Aorta (tissue), 5 donors: ENCODE measurements at regions of chr9 and their contacts with region 1.

Region 1: DNA sequence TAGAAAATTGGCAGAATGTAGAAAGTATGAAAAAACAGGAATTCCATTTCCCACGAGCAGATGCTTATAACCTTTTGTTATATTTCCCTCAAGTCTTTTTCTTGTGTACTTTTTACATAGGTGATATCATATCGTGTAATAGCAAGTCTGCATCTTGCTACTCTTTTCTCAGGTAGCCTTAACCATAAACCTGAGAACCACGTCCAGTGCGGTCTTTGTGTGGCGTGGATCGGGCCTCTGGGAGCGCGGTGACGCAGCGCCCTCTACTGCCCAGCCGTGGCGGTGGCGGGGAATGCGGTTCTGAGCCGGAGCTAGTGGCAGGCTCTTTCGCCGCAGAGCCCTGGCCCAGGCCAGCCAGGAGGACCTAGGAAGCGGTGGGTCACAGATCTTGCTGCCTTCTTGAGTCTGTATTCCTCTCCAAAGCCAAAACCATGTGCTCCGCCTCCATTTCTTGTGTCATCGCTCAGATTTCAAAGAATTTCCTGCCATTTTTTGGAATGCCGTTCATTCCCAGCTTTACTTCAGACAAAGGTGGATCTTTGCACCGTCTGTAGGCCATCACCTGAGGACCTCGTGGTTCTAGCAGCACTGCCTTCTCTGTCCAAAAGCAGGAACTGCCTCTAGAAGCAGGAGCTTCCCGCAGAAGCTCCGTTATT is 71.9 kb downstream of the MVB12B start:
- DNase-seq: peak; percentile 80 to 94
- ATAC-seq: peak; percentile 90
- H3K4me3 ChIP-seq: no peak overlapping the region
- H3K27ac ChIP-seq: no peak overlapping the region
- H3K4me1 ChIP-seq: no peaks in the 10 kb centered on the region
- H3K27me3 ChIP-seq: no peaks in the 10 kb centered on the region

Region 2: DNA sequence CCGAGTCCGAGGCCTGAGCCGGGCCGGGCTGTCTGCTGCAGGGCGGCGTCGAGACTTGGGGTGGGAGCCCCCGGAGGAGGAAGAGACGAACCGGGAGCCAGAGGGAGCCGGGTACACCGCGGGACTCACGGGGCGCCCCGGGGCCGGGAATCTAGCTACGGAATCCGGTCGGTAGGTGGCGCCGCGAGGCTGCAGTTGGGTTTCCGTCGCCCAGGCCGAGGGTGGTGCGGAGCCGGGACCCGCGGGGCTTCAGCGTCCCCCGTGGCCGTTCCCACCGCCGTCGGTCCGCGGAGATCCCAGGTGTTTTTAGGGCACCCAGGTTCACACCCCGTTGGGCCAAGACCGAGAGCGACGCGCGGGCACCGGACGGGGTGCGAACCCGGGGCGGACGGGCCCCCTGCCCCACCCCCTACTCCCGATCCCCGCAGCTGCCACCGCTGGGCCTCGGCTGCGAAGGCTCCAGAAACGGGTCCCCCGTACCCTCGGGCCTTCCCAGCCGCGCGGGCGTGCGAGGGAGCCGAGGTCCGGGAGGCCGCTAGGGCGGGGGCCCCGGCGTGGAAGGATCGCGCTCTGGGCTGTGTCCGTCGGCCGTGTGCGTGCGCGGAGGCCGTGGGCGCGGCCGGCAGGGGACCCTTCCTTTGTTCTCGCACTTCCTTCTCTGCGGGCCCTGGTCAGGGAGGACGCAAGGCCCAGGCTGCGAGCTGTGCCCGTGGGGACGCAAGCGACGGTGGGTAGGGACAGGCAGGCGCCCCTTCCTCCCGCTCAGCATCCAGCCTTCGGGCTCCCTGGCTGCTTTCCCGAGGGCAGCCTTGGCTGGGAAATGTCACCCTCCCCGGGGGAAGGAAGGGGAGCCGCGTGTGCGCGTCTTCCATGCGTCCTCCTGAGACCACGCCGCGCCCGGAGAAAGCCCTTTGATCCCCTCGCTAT is 990.3 kb before region 1 on chr9:
- intact Hi-C with region 1: loop called in 1 of 2 experiments (anchors 5 kb)
- DNase-seq: peak; percentile 82 to 95
- ATAC-seq: peak; percentile 87
- H3K4me3 ChIP-seq: peak overlapping the region in 1 of 2 donors; percentile 19
- H3K27ac ChIP-seq: no peak overlapping the region
- H3K4me1 ChIP-seq: no peaks in the 10 kb centered on the region
- H3K27me3 ChIP-seq: no peaks in the 10 kb centered on the region

Region 3: GRCh38 chr9:126301985-126302603 is 96.4 kb before region 1 on chr9:
- intact Hi-C with region 1: loop called (anchors 1 to 5 kb)
- DNase-seq: no peak
- ATAC-seq: peak; percentile 73
- H3K4me3 ChIP-seq: no peak overlapping the region
- H3K27ac ChIP-seq: no peak overlapping the region
- H3K4me1 ChIP-seq: no peaks in the 10 kb centered on the region
- H3K27me3 ChIP-seq: no peaks in the 10 kb centered on the region

Region 4: DNA sequence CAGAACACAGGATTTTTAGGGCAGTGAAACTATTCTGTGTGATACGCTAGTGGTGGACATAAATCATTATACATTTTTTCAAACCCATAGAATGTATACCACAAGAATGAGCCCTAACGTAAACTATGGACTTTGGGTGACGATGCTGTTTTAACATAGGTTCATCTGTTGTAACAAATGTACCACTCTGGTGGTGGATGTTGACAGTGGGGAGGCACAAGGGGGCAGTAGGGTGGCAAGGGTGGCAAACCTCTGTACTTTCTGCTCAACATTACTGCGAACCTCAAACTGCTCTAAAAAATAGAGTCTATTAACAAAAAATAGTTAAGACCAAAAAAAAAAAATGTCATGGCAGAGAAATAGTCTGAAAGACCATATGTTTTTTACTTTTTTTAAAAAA is 81.0 kb before region 1 on chr9:
- intact Hi-C with region 1: loop called in 1 of 2 experiments (anchors 5 kb)
- DNase-seq: peak in 1 of 2 donors; percentile 53
- ATAC-seq: no peak
- H3K4me3 ChIP-seq: no peak overlapping the region
- H3K27ac ChIP-seq: no peak overlapping the region
- H3K4me1 ChIP-seq: no peaks in the 10 kb centered on the region
- H3K27me3 ChIP-seq: no peaks in the 10 kb centered on the region

Region 5: GRCh38 chr9:126490871-126491567 is 92.5 kb after region 1 on chr9:
- intact Hi-C with region 1: loop called in 1 of 2 experiments (anchors 10 kb)
- DNase-seq: peak; percentile 15 to 35
- ATAC-seq: peak; percentile 79
- H3K4me3 ChIP-seq: no peak overlapping the region
- H3K27ac ChIP-seq: no peak overlapping the region
- H3K4me1 ChIP-seq: no peaks in the 10 kb centered on the region
- H3K27me3 ChIP-seq: no peaks in the 10 kb centered on the region